Transverse colon (tissue), 4 donors: ENCODE measurements at regions of chr13 and their contacts with region 1.

Region 1: GRCh38 chr13:32164622-32165268 is 133.2 kb downstream of the FRY start:
- DNase-seq: no peak
- H3K4me3 ChIP-seq: no peak overlapping the region
- H3K27ac ChIP-seq: no peak overlapping the region
- H3K4me1 ChIP-seq: no peaks in the 10 kb centered on the region
- H3K27me3 ChIP-seq: no peaks in the 10 kb centered on the region
- CTCF ChIP-seq: peak; percentile 34 to 54 (median 39)
- EP300 ChIP-seq: no peak
- POLR2A ChIP-seq: no peak

Region 2: GRCh38 chr13:32200749-32201148 is 36.0 kb after region 1 on chr13:
- in situ Hi-C with region 1: no loop called
- intact Hi-C with region 1: loop called (anchors 5 kb)
- DNase-seq: no peak
- H3K4me3 ChIP-seq: no peak overlapping the region
- H3K27ac ChIP-seq: no peak overlapping the region
- H3K4me1 ChIP-seq: peaks cover 0 to 5% (median 2%) of the 10 kb centered on the region in 4 donors
- H3K27me3 ChIP-seq: no peaks in the 10 kb centered on the region
- CTCF ChIP-seq: no peak
- EP300 ChIP-seq: no peak
- POLR2A ChIP-seq: no peak

Region 3: DNA sequence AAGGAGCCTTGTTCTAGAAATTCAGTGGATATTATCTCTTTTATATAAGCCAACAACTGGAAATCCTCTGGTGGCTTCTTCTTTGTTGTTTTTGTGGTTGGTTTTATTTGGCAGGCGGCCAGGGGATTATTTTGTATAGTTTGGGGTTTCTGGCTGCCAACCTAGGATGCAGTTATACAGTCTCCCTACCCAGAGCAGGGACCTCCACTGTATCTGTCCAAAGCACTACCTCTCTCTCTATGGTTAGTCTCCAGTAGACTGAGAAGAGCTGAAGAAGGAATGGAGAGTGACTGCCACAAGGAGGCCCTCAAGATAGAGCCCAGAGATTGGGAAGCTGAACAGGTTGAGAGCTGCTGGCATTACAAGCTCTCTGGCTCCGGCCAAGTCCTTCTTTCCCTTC is 70.2 kb after region 1 on chr13:
- in situ Hi-C with region 1: no loop called
- intact Hi-C with region 1: no loop called
- DNase-seq: no peak
- H3K4me3 ChIP-seq: no peak overlapping the region
- H3K27ac ChIP-seq: no peak overlapping the region
- H3K4me1 ChIP-seq: no peaks in the 10 kb centered on the region
- H3K27me3 ChIP-seq: no peaks in the 10 kb centered on the region
- CTCF ChIP-seq: no peak
- EP300 ChIP-seq: no peak
- POLR2A ChIP-seq: no peak